ENCODE measurements at regions of chr1 and their contacts with region 1.

Region 1: GRCh38 chr1:54764133-54764921 is at the start of gene PARS2:
- DNase-seq: peak; percentile 99
- H3K4me3 Mint-ChIP-seq: peak within 1 kb of the TSS; percentile 95
- H3K27ac Mint-ChIP-seq: peak within 1 kb of the TSS; percentile 95
- H3K4me1 Mint-ChIP-seq: peaks cover 8% of the 10 kb centered on the region
- H3K27me3 Mint-ChIP-seq: no peaks in the 10 kb centered on the region
- CTCF ChIP-seq: no peak
- total RNA-seq, gene PARS2: 4.7 and 5.4 TPM in 2 replicates

Region 2: DNA sequence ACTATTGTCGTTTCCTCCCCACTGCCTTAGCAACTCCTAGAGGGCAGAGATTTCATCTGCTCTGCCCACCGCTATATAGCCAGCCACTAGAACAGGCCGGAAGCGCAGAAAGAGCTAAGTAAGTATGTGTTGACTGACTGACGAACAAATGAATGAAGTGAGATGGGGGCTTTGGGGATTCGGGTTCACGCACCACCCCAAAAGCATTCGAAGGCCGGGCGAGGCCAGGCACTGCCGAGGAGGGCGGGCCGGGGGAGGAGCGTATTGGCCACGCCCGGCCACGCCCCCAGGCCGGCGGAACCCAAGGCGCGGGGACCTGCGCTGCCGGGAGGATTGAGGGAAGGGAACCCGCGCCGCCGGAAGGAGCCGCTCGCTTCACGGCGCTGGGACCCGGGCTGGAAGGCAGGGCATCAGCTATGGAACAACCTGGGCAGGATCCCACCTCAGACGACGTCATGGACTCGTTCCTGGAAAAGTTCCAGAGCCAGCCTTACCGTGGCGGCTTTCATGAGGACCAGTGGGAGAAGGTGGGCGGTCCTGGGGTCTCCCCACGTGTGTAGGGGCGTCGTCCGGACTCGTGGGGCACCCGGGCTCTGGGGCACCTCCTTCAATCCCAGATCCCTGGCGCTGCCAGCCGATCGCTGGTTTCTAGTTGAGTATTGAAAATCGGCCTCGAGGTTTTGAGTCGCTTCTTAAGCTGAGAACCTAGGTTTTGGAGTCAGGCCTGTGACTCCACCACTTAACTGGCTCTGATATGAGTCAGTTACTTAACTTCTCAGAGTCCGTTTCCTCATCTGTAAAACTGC is 48.6 kb before region 1 on chr1 and contains the start of gene TTC4:
- CTCF ChIA-PET with region 1: no interaction called
- POLR2A ChIA-PET with region 1: interaction called, 20 read pairs
- intact Hi-C with region 1: loop called (anchors 1 kb)
- DNase-seq: peak; percentile 85
- H3K4me3 Mint-ChIP-seq: peak within 1 kb of the TSS; percentile 87
- H3K27ac Mint-ChIP-seq: peak within 1 kb of the TSS; percentile 94
- H3K4me1 Mint-ChIP-seq: peaks cover 7% of the 10 kb centered on the region
- H3K27me3 Mint-ChIP-seq: peaks cover 18% of the 10 kb centered on the region
- CTCF ChIP-seq: no peak
- total RNA-seq, gene TTC4: 25.0 and 25.4 TPM in 2 replicates